Activated CD4-positive, alpha-beta memory T cell treated with anti-CD3 and anti-CD28 coated beads for 36 hours (primary cell): ENCODE measurements at regions of chr1 and their contacts with region 1.

Region 1: GRCh38 chr1:47437447-47438164 is at the start of gene FOXD2:
- DNase-seq: peak; percentile 93
- H3K4me3 Mint-ChIP-seq: peak within 1 kb of the TSS; percentile 95
- H3K27ac Mint-ChIP-seq: peak within 1 kb of the TSS; percentile 69
- H3K4me1 Mint-ChIP-seq: peaks cover 26% of the 10 kb centered on the region
- H3K27me3 Mint-ChIP-seq: peaks cover 13% of the 10 kb centered on the region
- total RNA-seq, gene FOXD2: 0.10 to 0.26 TPM

Region 2: GRCh38 chr1:47231301-47232186 is 206.1 kb before region 1 on chr1:
- CTCF ChIA-PET with region 1: interaction called, 3 read pairs
- POLR2A ChIA-PET with region 1: interaction called, 3 read pairs
- intact Hi-C with region 1: loop called (anchors 5 kb)
- DNase-seq: peak; percentile 45
- H3K4me3 Mint-ChIP-seq: peak overlapping the region; percentile 50
- H3K27ac Mint-ChIP-seq: no peak overlapping the region
- H3K4me1 Mint-ChIP-seq: peaks cover 25% of the 10 kb centered on the region
- H3K27me3 Mint-ChIP-seq: peaks cover 76% of the 10 kb centered on the region

Region 3: DNA sequence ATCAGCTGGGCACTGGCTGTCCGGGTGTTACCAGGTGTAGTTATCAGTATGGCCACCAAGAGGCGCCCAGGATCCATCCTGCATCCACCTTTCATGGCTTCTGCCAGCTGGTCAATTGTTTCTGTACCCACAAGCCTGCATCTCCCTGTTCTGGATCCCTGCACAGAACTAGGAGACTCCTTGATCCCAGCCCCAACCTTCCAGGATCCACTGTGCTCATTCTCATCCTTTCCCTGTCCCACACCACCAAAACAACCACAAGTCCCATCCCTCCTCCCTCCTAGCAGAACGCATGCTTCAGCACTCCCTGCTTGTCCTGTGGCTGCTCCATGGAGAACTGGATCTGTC is 48.7 kb before region 1 on chr1:
- CTCF ChIA-PET with region 1: interaction called, 33 read pairs
- POLR2A ChIA-PET with region 1: no interaction called
- intact Hi-C with region 1: loop called (anchors 2 kb)
- DNase-seq: peak; percentile 71
- H3K4me3 Mint-ChIP-seq: no peak overlapping the region
- H3K27ac Mint-ChIP-seq: no peak overlapping the region
- H3K4me1 Mint-ChIP-seq: no peaks in the 10 kb centered on the region
- H3K27me3 Mint-ChIP-seq: no peaks in the 10 kb centered on the region

Region 4: GRCh38 chr1:47407481-47407880 is 30.1 kb before region 1 on chr1:
- CTCF ChIA-PET with region 1: no interaction called
- POLR2A ChIA-PET with region 1: no interaction called
- intact Hi-C with region 1: no loop called
- DNase-seq: no peak
- H3K4me3 Mint-ChIP-seq: no peak overlapping the region
- H3K27ac Mint-ChIP-seq: no peak overlapping the region
- H3K4me1 Mint-ChIP-seq: no peaks in the 10 kb centered on the region
- H3K27me3 Mint-ChIP-seq: peaks cover 6% of the 10 kb centered on the region

Region 5: GRCh38 chr1:47449822-47450552 is 12.4 kb after region 1 on chr1:
- CTCF ChIA-PET with region 1: interaction called, 59 read pairs
- POLR2A ChIA-PET with region 1: interaction called, 3 read pairs
- intact Hi-C with region 1: no loop called
- DNase-seq: peak; percentile 46
- H3K4me3 Mint-ChIP-seq: no peak overlapping the region
- H3K27ac Mint-ChIP-seq: no peak overlapping the region
- H3K4me1 Mint-ChIP-seq: peaks cover 9% of the 10 kb centered on the region
- H3K27me3 Mint-ChIP-seq: peaks cover 74% of the 10 kb centered on the region

Region 6: DNA sequence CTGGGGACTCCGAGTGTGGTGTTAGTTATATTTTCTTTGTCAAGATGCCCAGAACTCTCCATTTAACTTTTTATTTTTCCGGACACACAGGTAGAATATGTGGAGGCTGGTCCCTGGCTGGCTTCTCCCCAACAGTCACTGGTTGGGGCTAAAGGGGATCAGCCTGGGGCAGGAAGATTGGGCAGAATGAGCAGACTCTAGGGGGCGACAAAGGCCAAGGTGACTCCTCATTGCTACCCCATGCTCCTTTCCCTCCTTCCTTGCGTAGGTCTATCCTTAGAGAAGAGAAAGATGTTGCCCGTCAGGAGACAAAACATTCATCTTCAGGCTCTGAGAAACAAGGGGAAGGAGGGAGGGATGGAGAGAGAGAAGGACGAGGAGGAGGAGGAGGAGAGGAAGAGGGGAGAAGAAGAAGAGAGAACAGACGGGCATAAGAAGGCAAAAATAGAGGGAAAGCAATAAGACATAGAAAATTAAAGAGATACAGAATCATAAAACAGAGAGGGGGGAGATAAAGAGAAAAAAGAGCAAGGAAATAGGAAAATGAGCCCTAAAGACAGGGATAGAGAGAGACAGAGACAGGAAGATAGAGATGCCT is 90.2 kb after region 1 on chr1:
- CTCF ChIA-PET with region 1: interaction called, 11 read pairs
- POLR2A ChIA-PET with region 1: no interaction called
- intact Hi-C with region 1: no loop called
- DNase-seq: no peak
- H3K4me3 Mint-ChIP-seq: no peak overlapping the region
- H3K27ac Mint-ChIP-seq: no peak overlapping the region
- H3K4me1 Mint-ChIP-seq: no peaks in the 10 kb centered on the region
- H3K27me3 Mint-ChIP-seq: peaks cover 55% of the 10 kb centered on the region

Region 7: GRCh38 chr1:47725992-47726855 is 288.6 kb after region 1 on chr1:
- CTCF ChIA-PET with region 1: interaction called, 89 read pairs
- POLR2A ChIA-PET with region 1: interaction called, 5 read pairs
- intact Hi-C with region 1: loop called (anchors 1 kb)
- DNase-seq: peak; percentile 79
- H3K4me3 Mint-ChIP-seq: peak overlapping the region; percentile 27
- H3K27ac Mint-ChIP-seq: no peak overlapping the region
- H3K4me1 Mint-ChIP-seq: peaks cover 14% of the 10 kb centered on the region
- H3K27me3 Mint-ChIP-seq: peaks cover 37% of the 10 kb centered on the region

Region 8: GRCh38 chr1:47785561-47786271 is 348.1 kb after region 1 on chr1:
- CTCF ChIA-PET with region 1: no interaction called
- POLR2A ChIA-PET with region 1: no interaction called
- intact Hi-C with region 1: no loop called
- DNase-seq: no peak
- H3K4me3 Mint-ChIP-seq: no peak overlapping the region
- H3K27ac Mint-ChIP-seq: no peak overlapping the region
- H3K4me1 Mint-ChIP-seq: no peaks in the 10 kb centered on the region
- H3K27me3 Mint-ChIP-seq: peaks cover 5% of the 10 kb centered on the region